Activated CD4-positive, alpha-beta T cell treated with anti-CD3 and anti-CD28 coated beads, Interleukin-2, amount 10 ng/mL, durations not matched to agents 24 days and 14 days (primary cell): ENCODE measurements at regions of chr7 and their contacts with region 1.

Region 1: GRCh38 chr7:111741811-111742240 is 179.5 kb upstream of the IMMP2L start:
- DNase-seq: peak; percentile 75
- H3K4me3 Mint-ChIP-seq: no peak overlapping the region
- H3K27ac Mint-ChIP-seq: no peak overlapping the region
- H3K4me1 Mint-ChIP-seq: no peaks in the 10 kb centered on the region
- H3K27me3 Mint-ChIP-seq: no peaks in the 10 kb centered on the region

Region 2: GRCh38 chr7:111600091-111600490 is 141.7 kb before region 1 on chr7:
- intact Hi-C with region 1: no loop called
- DNase-seq: no peak
- H3K4me3 Mint-ChIP-seq: no peak overlapping the region
- H3K27ac Mint-ChIP-seq: no peak overlapping the region
- H3K4me1 Mint-ChIP-seq: no peaks in the 10 kb centered on the region
- H3K27me3 Mint-ChIP-seq: no peaks in the 10 kb centered on the region

Region 3: DNA sequence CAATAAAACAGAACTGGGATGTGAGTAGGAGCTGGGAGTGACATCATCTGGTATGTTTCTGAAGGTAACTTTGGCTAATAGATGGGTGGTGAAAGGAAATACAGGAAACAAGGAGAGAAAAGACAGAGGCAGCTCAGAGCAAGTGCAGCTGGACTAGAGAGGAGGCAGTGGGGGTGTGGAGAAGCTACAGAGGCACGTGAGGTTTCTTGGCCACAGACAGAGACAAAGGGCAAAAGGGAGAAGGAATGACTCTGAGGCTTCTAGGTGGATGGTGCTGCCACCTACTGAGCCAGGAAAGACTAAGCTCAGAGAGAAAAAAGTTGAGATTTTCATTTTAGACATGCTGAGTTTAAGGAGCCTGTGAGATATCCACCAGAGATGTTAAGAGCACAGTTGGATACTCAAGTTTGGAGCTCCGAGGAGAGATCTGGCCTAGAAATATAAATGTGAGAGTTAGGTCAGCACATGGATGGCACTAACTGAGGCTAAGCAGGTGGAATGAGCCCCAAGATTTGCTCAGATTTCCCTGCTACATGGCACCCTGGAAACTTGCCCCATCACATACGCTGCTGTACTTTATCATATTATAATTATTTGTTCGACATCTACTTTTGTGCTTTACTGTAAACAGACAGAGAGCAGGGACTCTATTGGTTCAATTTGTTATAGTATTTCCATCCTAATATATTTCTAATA is 113.5 kb after region 1 on chr7:
- intact Hi-C with region 1: loop called (anchors 5 kb)
- DNase-seq: no peak
- H3K4me3 Mint-ChIP-seq: no peak overlapping the region
- H3K27ac Mint-ChIP-seq: no peak overlapping the region
- H3K4me1 Mint-ChIP-seq: peaks cover 3% of the 10 kb centered on the region
- H3K27me3 Mint-ChIP-seq: peaks cover 1% of the 10 kb centered on the region